ENCODE measurements at regions of chr19 and their contacts with region 1.

Region 1: DNA sequence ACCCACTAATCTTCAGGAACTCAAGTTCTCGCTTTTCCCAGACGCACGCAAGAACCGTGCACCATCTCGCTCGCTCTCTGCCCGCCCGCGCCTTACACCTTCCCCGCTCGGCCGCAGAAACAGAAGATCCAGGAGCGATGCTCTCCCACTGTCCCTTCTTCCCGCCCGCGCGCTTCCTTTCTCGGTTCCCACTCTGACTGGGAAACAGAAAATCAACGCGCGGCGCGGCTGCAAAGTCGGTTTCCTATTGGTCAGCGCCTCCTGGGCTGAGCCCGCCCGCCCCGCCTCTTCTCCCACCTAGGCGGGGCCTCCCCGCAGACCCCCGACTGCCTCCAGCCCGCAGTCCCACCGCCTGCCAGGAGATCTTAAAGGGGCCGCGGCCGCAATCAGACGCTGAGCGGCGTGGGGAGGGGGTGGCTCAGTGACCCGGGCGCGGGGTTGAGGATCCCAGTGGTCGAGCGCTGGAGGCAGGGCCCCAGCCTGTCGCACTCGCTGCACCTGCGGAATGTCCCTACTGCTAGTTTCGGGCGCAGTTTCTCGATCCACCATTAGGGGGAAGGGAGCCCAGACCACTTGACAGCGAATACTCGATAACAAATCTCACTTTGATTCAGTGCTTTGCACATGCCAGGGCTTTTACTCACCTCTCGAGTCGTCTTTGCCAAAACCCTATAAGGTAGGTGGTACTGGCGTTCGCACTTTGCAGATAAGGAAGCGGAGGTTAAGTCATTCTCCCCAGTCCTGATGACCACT is 685 bp upstream of the SLC25A23 start:
- DNase-seq: peak; percentile 97
- ATAC-seq: peak; percentile 96

Region 2: GRCh38 chr19:6424939-6425731 is 35.1 kb before region 1 on chr19:
- intact Hi-C with region 1: loop called (anchors 1 kb)
- DNase-seq: peak; percentile 99
- ATAC-seq: peak; percentile 95

Measured in Right ventricle myocardium inferior (tissue), 1 donor.